ENCODE measurements at regions of chr9 and their contacts with region 1.

Region 1: DNA sequence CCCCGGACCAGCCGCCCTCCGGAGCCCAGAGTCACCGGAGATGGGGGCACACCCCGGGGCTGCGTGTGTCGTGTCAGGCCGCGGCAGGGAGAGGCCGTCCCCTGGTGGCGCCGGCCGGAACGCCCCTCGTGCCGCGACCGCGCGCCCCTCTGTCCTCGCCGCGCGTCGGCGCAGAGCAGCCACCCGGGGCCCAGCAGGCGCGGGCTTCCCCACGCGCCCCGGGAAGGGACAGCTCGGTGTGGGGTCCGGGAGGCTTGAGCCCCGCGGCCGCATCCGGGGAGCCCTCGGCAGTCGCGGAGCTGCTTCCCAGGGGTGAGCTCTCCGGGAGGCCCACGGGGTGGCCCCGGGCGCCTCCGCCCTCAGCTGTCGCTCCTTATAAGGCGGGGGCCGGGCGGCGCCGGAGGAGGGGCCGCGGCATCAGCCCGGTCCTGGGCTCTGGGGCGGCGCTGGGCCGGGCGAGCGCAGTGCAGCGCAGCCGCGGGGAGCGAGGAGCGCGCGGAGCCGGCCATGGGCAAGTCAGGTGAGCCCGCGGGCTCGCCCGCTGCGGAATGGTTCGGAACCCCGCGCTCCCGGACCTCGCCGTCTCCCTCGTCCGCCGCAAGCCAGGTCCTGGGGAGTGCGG is at the start of gene GLIPR2:
- DNase-seq: peak; percentile 88
- ATAC-seq: peak; percentile 96
- H3K4me3 Mint-ChIP-seq: peak within 1 kb of the TSS; percentile 81
- H3K27ac Mint-ChIP-seq: peak within 1 kb of the TSS; percentile 48
- H3K4me1 Mint-ChIP-seq: peaks cover 45% of the 10 kb centered on the region
- H3K27me3 Mint-ChIP-seq: no peaks in the 10 kb centered on the region
- total RNA-seq, gene GLIPR2: 13.7 to 18.4 TPM

Region 2: GRCh38 chr9:35732122-35732799 is 404.1 kb before region 1 on chr9 and contains the starts of genes CREB3 and TLN1:
- CTCF ChIA-PET with region 1: no interaction called
- POLR2A ChIA-PET with region 1: no interaction called
- intact Hi-C with region 1: no loop called
- DNase-seq: peak; percentile 98
- ATAC-seq: peak; percentile 87
- H3K4me3 Mint-ChIP-seq: no peak within 1 kb of the TSS
- H3K27ac Mint-ChIP-seq: peak within 1 kb of the TSS; percentile 93
- H3K4me1 Mint-ChIP-seq: peaks cover 21% of the 10 kb centered on the region
- H3K27me3 Mint-ChIP-seq: no peaks in the 10 kb centered on the region
- total RNA-seq, gene CREB3: 24.0 to 26.0 TPM
- total RNA-seq, gene TLN1: 217 to 238 TPM

Region 3: DNA sequence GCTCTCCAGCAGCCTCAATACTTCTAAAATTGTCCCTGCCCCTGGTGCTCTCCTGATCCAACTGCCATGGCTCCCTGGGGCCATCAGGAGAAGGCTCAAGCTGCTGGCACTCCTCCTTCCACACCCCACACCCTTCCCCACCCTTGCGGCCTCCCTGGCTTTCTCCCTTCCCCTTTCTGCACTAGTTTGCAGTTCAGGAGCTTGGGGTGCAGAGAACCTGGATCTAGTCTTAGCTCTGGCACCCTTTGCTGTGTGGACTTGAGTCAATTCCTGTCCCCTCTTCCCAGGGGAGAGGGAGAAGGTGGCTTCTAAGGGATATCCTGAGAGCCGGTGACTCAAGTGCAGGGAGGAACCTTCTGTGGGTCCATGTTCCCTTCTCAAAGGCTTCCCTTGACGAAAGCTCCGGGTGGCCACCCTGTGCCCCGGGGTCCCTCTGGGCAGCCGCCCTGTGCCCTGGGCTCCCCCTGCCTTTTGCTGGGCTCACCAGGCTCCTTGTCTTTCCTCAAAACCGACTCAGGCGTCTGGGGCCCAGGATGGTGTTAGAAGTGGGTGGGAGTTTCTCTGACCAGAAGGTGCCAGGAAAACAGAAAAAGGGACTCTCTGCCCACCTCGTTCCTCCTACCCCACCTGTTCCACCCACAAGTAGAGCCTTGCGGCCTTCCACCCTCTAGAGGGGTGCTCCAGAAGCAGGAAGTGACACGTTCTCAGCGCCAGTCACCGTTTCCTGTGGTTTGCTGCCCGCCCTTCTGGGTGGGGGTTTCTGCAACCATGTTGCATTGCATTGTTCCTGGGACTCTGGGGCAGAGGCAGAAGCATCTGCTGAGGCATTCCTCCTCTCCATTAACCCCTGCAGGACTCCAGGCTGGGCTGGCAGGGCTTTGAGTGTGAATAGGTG is 15.2 kb after region 1 on chr9:
- CTCF ChIA-PET with region 1: interaction called, 5 read pairs
- POLR2A ChIA-PET with region 1: no interaction called
- intact Hi-C with region 1: loop called (anchors 1 to 2 kb)
- DNase-seq: peak; percentile 93
- ATAC-seq: peak; percentile 93
- H3K4me3 Mint-ChIP-seq: peak overlapping the region; percentile 69
- H3K27ac Mint-ChIP-seq: peak overlapping the region; percentile 95
- H3K4me1 Mint-ChIP-seq: peaks cover 69% of the 10 kb centered on the region
- H3K27me3 Mint-ChIP-seq: no peaks in the 10 kb centered on the region

Region 4: DNA sequence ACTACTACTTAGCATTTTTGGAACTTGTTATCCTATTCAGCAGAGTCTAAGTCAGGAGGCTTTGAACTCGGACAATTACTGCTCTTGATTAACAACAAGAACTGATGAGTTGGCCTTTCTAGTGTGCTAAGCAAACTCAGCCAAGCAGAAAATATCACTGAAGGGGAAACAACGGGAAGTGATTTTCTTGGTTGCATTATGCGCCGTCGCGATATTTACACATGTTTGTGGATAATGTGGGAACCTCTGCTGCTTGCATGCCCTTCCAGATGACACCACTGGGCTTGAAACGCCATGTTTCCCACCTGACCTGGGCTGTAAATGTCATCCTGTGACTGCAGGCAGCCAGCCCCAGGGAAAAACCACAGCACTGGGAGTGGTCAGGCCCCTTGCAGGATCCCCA is 692.2 kb after region 1 on chr9:
- CTCF ChIA-PET with region 1: no interaction called
- POLR2A ChIA-PET with region 1: no interaction called
- intact Hi-C with region 1: no loop called
- DNase-seq: no peak
- ATAC-seq: no peak
- H3K4me3 Mint-ChIP-seq: no peak overlapping the region
- H3K27ac Mint-ChIP-seq: no peak overlapping the region
- H3K4me1 Mint-ChIP-seq: no peaks in the 10 kb centered on the region
- H3K27me3 Mint-ChIP-seq: no peaks in the 10 kb centered on the region